ENCODE measurements at regions of chr11 and their contacts with region 1.

Region 1: DNA sequence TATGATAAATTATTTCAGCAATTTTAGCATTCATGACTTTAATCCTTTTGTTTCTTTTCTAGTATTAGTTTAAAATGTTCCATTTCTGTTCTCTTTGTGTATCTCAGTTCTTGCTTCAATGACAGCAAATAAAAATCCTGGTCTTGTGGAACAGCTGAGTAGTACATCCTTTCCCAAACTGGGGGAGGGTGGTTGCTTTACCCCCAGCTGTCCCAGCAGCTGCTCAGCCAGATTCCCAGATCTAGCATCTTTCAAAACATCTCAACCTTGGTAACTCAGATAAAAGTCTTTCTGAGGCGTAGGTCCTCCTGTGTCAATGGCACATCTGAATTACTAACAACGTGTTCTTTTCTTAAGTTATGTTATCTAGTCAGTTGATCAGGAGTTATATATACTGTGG is 72.2 kb upstream of the GRK2 start:
- DNase-seq: no peak
- ATAC-seq: no peak
- H3K4me3 Mint-ChIP-seq: no peak overlapping the region
- H3K27ac Mint-ChIP-seq: no peak overlapping the region
- H3K4me1 Mint-ChIP-seq: peaks cover 23% of the 10 kb centered on the region
- H3K27me3 Mint-ChIP-seq: no peaks in the 10 kb centered on the region
- CTCF ChIP-seq: no peak

Region 2: DNA sequence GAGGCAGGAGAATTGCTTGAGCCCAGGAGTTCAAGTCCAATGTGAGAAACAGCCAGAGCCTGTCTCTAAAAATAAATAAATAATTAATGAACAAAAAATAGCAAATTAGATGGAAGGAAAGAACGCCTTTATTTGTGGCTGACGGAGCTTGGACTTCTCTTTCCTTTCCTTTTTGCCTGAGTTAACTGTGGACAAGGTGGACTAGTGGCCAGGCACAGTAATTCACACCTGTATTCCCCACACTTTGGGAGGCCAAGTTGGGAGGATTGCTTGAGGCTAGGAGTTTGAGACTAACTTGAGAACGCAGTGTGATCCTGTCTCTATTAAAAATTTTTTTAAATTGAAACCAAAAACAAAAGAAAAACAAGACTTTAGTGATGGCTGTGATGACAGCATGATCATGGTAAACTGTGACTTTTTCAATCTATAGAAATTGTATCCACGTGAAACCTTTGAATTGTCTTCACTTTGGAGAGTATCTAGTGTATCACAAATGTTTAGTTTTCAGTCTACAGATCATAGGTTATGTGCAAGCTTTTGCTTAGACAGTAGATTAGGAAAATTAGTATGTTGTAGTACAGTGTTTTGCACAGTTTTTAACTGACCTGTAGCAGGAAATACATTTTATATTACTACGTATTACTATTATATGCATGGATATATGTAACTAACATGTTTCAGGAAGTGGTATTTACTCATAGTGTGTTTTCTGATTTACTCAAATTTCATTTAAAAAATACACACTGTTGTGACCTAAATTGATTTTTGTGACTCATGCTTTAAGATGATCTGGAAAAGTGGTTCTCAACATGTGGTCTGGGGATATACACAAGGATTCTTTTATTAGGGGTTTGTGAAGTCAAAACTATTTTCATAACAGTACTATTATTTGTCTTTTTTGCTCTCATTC is 33.0 kb before region 1 on chr11:
- CTCF ChIA-PET with region 1: interaction called, 3 read pairs
- POLR2A ChIA-PET with region 1: interaction called, 11 read pairs
- DNase-seq: no peak
- ATAC-seq: no peak
- H3K4me3 Mint-ChIP-seq: no peak overlapping the region
- H3K27ac Mint-ChIP-seq: no peak overlapping the region
- H3K4me1 Mint-ChIP-seq: peaks cover 9% of the 10 kb centered on the region
- H3K27me3 Mint-ChIP-seq: no peaks in the 10 kb centered on the region
- CTCF ChIP-seq: no peak

Measured in WTC11 (cell line).